Caco-2 (cell line): ENCODE measurements at regions of chr19 and their contacts with region 1.

Region 1: GRCh38 chr19:44770550-44771257 is 7.0 kb upstream of the CBLC start:
- DNase-seq: peak; percentile 97 to 98
- H3K4me3 ChIP-seq: no peak overlapping the region
- H3K4me3 Mint-ChIP-seq: peak overlapping the region; percentile 6
- H3K27ac Mint-ChIP-seq: no peak overlapping the region
- H3K4me1 ChIP-seq: peaks cover 2% of the 10 kb centered on the region
- H3K4me1 Mint-ChIP-seq: no peaks in the 10 kb centered on the region
- H3K27me3 ChIP-seq: no peaks in the 10 kb centered on the region
- H3K27me3 Mint-ChIP-seq: no peaks in the 10 kb centered on the region
- CTCF ChIP-seq: peak; percentile 66 to 95

Region 2: DNA sequence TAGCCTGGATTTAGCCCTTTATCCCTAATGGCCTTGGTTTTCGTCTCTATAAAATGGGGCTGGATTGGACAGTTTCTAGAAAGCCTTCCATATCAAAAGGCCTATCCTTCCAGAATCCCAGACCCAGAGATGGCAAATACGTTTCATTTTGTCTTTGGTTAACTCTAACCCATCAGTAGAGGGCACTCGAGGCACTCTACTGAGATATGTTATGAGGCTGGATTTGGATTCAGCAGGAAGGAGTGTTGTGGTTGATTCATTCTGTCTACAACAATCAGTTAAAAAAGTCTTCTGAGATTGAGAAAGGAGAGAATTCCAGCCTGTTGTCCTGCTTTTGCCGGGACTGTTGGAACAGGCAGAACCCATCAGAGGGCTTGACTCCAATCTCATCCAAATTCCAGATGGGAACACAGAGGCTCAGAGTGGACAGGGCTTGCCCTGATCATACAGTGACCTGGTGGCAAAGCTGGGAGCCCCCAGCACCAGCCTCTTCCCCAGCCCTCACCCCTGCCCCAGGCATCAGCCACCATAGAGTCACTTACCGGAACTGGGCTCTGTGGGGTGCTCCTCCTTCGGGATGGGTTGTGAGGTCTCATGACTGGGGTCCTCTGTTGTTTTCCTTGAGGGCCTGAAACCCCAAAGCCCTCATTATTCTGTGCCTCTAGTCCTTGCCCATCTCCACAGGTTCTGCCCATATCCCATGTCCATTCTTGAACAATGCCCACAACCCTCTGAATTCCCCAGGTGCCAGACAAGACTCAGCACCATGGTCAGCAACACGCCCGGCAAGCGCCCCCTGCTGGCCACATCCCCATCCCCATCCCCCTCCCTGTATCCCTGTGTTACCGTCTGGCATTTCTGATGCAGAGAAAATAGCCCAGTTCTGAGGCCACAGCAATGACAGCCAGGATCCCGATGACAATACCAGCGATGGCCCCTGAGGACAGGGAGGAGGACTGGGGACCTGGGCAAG is 258.1 kb before region 1 on chr19:
- CTCF ChIA-PET with region 1: no interaction called
- POLR2A ChIA-PET with region 1: no interaction called
- intact Hi-C with region 1: loop called (anchors 5 kb)
- DNase-seq: peak; percentile 63 to 75
- H3K4me3 ChIP-seq: no peak overlapping the region
- H3K4me3 Mint-ChIP-seq: no peak overlapping the region
- H3K27ac Mint-ChIP-seq: no peak overlapping the region
- H3K4me1 ChIP-seq: no peaks in the 10 kb centered on the region
- H3K4me1 Mint-ChIP-seq: no peaks in the 10 kb centered on the region
- H3K27me3 ChIP-seq: no peaks in the 10 kb centered on the region
- H3K27me3 Mint-ChIP-seq: peaks cover 19% of the 10 kb centered on the region
- CTCF ChIP-seq: peak; percentile 68 to 73

Region 3: GRCh38 chr19:44587963-44588770 is 182.5 kb before region 1 on chr19:
- CTCF ChIA-PET with region 1: interaction called, 13 read pairs
- POLR2A ChIA-PET with region 1: no interaction called
- intact Hi-C with region 1: loop called (anchors 5 kb)
- DNase-seq: peak in 1 of 2 experiments; percentile 72
- H3K4me3 ChIP-seq: no peak overlapping the region
- H3K4me3 Mint-ChIP-seq: peak overlapping the region; percentile 67
- H3K27ac Mint-ChIP-seq: peak overlapping the region; percentile 99
- H3K4me1 ChIP-seq: peaks cover 57% of the 10 kb centered on the region
- H3K4me1 Mint-ChIP-seq: peaks cover 58% of the 10 kb centered on the region
- H3K27me3 ChIP-seq: no peaks in the 10 kb centered on the region
- H3K27me3 Mint-ChIP-seq: no peaks in the 10 kb centered on the region
- CTCF ChIP-seq: no peak

Region 4: GRCh38 chr19:44702551-44703176 is 68.0 kb before region 1 on chr19:
- CTCF ChIA-PET with region 1: no interaction called
- POLR2A ChIA-PET with region 1: no interaction called
- intact Hi-C with region 1: no loop called
- DNase-seq: no peak
- H3K4me3 ChIP-seq: no peak overlapping the region
- H3K4me3 Mint-ChIP-seq: no peak overlapping the region
- H3K27ac Mint-ChIP-seq: peak overlapping the region; percentile 44
- H3K4me1 ChIP-seq: 0 out of 2 replicates have a peak, but pooled peaks cover 2% of the 10 kb centered on the region
- H3K4me1 Mint-ChIP-seq: peaks cover 14% of the 10 kb centered on the region
- H3K27me3 ChIP-seq: no peaks in the 10 kb centered on the region
- H3K27me3 Mint-ChIP-seq: no peaks in the 10 kb centered on the region
- CTCF ChIP-seq: no peak

Region 5: DNA sequence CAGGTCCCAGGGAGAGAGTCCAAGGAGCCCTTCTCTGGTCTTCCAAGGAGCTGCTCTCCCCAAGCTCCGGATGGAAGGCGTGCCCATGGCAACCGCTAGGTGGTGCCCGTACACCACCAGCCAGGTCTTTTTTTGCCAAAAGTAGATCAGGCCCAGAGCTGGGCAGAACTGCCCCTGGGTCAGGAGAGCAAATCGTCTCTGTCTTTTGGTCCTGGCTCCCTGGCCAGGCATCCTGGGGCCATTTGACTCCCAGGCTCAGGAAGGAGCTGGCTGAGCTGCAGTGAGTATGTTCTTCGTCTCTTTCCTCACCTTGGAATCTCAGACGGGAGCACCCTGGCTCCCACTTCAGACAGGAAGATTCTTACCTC is 46.8 kb before region 1 on chr19:
- CTCF ChIA-PET with region 1: interaction called, 206 read pairs
- POLR2A ChIA-PET with region 1: interaction called, 12 read pairs
- intact Hi-C with region 1: loop called (anchors 1 kb)
- DNase-seq: peak; percentile 87 to 91
- H3K4me3 ChIP-seq: peak overlapping the region; percentile 15
- H3K4me3 Mint-ChIP-seq: peak overlapping the region; percentile 62
- H3K27ac Mint-ChIP-seq: peak overlapping the region; percentile 43
- H3K4me1 ChIP-seq: peaks cover 53% of the 10 kb centered on the region
- H3K4me1 Mint-ChIP-seq: peaks cover 47% of the 10 kb centered on the region
- H3K27me3 ChIP-seq: no peaks in the 10 kb centered on the region
- H3K27me3 Mint-ChIP-seq: no peaks in the 10 kb centered on the region
- CTCF ChIP-seq: peak; percentile 97 to 98

Region 6: GRCh38 chr19:44746946-44747738 is 23.6 kb before region 1 on chr19:
- CTCF ChIA-PET with region 1: interaction called, 6 read pairs
- POLR2A ChIA-PET with region 1: interaction called, 3 read pairs
- intact Hi-C with region 1: loop called (anchors 2 kb)
- DNase-seq: peak; percentile 95 to 96
- H3K4me3 ChIP-seq: peak overlapping the region; percentile 61
- H3K4me3 Mint-ChIP-seq: peak overlapping the region; percentile 87
- H3K27ac Mint-ChIP-seq: peak overlapping the region; percentile 63
- H3K4me1 ChIP-seq: peaks cover 48% of the 10 kb centered on the region
- H3K4me1 Mint-ChIP-seq: peaks cover 30% of the 10 kb centered on the region
- H3K27me3 ChIP-seq: no peaks in the 10 kb centered on the region
- H3K27me3 Mint-ChIP-seq: no peaks in the 10 kb centered on the region
- CTCF ChIP-seq: no peak

Region 7: DNA sequence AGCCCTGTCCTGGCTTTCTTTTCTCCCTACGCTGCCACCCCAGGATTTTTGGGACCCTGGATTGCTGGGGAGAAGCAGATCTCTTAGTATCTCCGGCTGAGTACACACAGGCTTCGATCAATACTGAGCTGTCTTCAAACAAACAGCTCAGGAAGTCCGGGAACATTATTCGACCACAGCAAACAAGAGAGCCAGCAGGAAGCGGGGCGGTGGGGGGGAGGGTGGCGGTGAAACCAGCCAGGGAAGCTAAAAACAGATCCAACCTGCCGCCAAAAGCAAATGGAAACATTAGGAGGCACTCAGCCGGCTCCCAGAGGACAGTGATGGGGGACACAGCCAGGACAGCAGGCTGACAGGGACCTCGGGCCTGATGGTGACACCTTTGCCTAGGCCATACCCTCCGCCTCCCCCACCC is 26.0 kb after region 1 on chr19:
- CTCF ChIA-PET with region 1: no interaction called
- POLR2A ChIA-PET with region 1: no interaction called
- intact Hi-C with region 1: no loop called
- DNase-seq: no peak
- H3K4me3 ChIP-seq: no peak overlapping the region
- H3K4me3 Mint-ChIP-seq: no peak overlapping the region
- H3K27ac Mint-ChIP-seq: no peak overlapping the region
- H3K4me1 ChIP-seq: peaks cover 6% of the 10 kb centered on the region
- H3K4me1 Mint-ChIP-seq: peaks cover 9% of the 10 kb centered on the region
- H3K27me3 ChIP-seq: no peaks in the 10 kb centered on the region
- H3K27me3 Mint-ChIP-seq: no peaks in the 10 kb centered on the region
- CTCF ChIP-seq: no peak

Region 8: DNA sequence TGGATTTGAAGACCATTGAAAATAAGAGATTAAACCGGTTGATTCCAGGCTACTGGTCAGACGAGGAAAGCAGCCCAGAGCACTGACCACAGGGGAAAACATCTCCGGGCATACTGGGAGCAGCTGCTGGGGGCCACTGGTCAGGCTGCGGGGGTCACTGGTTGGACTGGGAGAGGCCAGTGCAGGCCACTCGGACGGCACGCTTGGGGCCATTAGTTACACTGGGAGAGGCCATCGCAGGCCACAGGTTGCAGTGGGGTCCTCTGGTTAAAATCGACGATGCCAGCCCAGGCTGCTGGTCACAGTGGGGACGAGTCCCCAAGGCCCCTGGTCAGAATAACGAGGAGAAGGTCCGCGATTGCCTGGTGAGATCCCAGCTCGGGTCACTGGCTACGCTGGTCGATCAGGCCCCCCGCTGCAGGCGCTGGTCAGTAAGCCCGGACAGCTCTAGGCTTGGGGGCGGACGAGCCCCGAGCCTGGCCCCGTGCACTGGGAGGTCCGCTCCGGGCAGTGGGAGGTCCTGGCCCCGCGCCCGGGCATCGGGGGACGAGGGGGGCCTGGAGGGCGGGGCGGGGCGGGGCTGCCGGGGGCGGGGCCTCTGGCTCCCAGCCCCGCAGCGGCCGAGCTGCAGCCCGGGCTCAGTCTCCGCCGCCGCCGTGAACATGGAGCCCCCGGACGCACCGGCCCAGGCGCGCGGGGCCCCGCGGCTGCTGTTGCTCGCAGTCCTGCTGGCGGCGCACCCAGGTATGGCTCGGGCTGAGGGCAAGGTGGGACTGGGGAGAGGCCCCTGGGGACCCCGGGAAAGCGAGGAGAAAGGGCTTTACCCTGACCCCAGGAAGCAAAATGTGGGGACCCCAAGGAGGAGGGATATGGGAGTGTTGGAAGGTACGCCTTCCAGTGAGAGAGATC is 38.0 kb after region 1 on chr19 and contains the start of gene BCAM:
- CTCF ChIA-PET with region 1: interaction called, 15 read pairs
- POLR2A ChIA-PET with region 1: no interaction called
- intact Hi-C with region 1: no loop called
- DNase-seq: peak; percentile 86
- H3K4me3 ChIP-seq: peak within 1 kb of the TSS; percentile 79
- H3K4me3 Mint-ChIP-seq: peak within 1 kb of the TSS; percentile 82
- H3K27ac Mint-ChIP-seq: peak within 1 kb of the TSS; percentile 95
- H3K4me1 ChIP-seq: peaks cover 27% of the 10 kb centered on the region
- H3K4me1 Mint-ChIP-seq: peaks cover 45% of the 10 kb centered on the region
- H3K27me3 ChIP-seq: no peaks in the 10 kb centered on the region
- H3K27me3 Mint-ChIP-seq: no peaks in the 10 kb centered on the region
- CTCF ChIP-seq: no peak
- total RNA-seq, gene BCAM: 230 and 244 TPM in 2 replicates